ENCODE measurements at regions of chr6 and their contacts with region 1.

Region 1: DNA sequence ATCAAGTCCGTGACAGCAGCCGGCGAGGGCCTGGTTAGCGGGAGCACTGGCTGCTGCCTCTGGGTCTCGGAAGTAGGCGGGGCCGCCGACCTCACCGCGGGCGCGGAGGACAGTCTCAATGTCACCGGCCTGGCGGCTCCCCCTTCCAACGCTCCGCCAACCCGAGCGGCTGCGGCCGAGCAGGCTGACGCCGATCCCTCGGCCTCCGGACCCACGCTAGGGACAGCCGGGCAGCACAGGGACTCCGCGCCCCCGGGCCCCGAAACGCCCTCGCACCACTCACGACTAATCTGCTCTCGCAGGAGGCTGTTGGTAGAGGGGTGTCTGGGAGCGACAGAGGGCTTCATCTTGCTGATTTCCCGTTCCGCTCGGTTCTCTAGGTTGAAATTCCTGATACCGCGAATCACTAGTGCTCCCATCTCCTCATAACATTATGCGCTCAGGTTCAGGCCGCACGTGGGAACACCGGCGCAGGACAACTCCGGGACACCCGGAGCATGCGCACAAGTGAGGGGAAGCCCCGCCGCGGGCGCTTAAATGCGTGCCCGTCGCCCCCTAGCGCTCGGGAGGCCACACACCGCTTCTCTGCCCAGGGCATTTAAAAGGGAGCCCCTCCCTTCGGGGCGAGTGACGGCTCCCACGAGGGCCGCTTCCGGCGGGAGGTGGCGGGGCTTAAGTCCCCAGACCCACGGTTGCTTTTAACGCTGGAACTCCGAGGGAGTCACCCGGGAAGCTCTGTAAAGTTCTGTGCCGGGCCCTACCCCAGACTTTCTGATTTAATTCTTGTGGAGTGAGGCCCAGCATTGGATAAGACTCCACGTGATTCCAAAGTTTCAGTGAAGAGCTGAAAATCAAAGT is at the start of gene NDUFAF4:
- DNase-seq: peak; percentile 88 to 97 (median 95)
- ATAC-seq: peak; percentile 93
- H3K4me3 ChIP-seq: peak within 1 kb of the TSS; percentile 91 to 98
- H3K4me3 Mint-ChIP-seq: peak within 1 kb of the TSS; percentile 98
- H3K27ac ChIP-seq: peak within 1 kb of the TSS; percentile 91
- H3K27ac Mint-ChIP-seq: peak within 1 kb of the TSS; percentile 90
- H3K4me1 ChIP-seq: peaks cover 37% of the 10 kb centered on the region
- H3K4me1 Mint-ChIP-seq: peaks cover 39% of the 10 kb centered on the region
- H3K27me3 ChIP-seq: no peaks in the 10 kb centered on the region
- H3K27me3 Mint-ChIP-seq: peaks cover 6% of the 10 kb centered on the region
- CTCF ChIP-seq: peak; percentile 97
- total RNA-seq, gene NDUFAF4: 31.6 to 34.4 TPM

Region 2: DNA sequence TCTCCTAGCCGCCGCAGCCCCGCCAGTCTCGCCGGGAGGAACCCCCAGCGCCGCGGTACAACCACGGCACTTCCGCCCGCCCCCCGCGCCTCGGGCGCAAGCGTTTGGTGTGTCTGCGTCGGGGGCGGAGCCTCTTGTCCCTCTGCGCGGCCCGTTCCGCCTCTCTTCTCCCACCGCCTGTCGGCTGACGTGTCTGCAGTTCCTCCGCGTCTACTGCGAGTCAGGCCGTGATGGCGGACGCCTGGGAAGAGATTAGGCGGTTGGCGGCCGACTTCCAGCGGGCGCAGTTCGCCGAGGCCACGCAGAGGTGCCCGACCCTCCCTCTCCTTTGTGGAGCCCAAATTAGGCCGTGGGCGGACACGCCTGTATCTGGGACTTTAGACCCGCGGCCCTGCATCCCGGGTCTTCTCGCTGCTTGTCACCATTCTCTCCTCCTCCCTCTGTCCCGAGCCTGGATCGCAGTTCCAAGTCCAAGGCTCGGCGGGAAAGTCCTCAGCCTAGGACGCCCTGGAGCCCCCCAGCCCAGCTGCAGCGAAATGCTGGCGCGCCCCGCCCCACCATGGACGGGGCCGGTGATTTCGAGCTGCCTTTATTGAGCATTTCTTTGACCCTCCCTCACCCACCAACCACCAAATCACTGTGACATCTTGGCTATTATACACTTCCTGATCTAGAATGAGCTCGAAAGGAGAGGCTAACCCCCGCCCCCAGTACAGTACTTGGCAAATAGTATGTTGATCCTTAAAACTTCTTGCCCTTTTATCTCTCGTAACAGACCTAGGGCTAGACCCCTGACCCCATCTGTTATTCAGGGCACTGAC is 375.8 kb before region 1 on chr6 and contains the start of gene UFL1:
- CTCF ChIA-PET with region 1: no interaction called
- POLR2A ChIA-PET with region 1: no interaction called
- intact Hi-C with region 1: loop called (anchors 1 to 5 kb)
- DNase-seq: peak; percentile 92 to 98 (median 96)
- ATAC-seq: peak; percentile 89
- H3K4me3 ChIP-seq: peak within 1 kb of the TSS; percentile 87 to 98
- H3K4me3 Mint-ChIP-seq: peak within 1 kb of the TSS; percentile 100
- H3K27ac ChIP-seq: peak within 1 kb of the TSS; percentile 98 to 99
- H3K27ac Mint-ChIP-seq: peak within 1 kb of the TSS; percentile 100
- H3K4me1 ChIP-seq: peaks cover 20% of the 10 kb centered on the region
- H3K4me1 Mint-ChIP-seq: peaks cover 37% of the 10 kb centered on the region
- H3K27me3 ChIP-seq: no peaks in the 10 kb centered on the region
- H3K27me3 Mint-ChIP-seq: no peaks in the 10 kb centered on the region
- CTCF ChIP-seq: no peak
- total RNA-seq, gene UFL1: 18.0 to 20.3 TPM

Region 3: DNA sequence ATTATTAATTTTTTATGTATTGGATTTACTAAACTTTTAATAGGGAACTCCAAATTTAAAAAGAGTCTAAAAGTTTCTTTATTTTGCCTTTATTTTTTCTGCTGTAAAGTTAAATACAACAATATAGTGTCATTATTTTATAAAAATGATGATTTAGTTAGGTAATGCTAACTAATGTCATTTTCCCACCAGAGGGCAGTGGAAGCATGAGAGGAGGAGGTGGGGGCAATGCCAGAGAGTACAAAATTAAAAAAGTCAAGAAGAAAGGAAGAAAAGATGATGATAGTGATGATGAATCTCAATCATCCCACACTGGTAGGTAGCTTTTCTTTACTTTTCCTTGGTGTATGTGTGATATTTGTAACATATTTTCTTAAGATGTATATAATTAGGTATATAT is 354.9 kb before region 1 on chr6:
- CTCF ChIA-PET with region 1: no interaction called
- POLR2A ChIA-PET with region 1: no interaction called
- intact Hi-C with region 1: loop called (anchors 5 kb)
- DNase-seq: peak in 2 of 9 experiments; percentile 26 to 38
- ATAC-seq: no peak
- H3K4me3 ChIP-seq: no peak overlapping the region
- H3K4me3 Mint-ChIP-seq: no peak overlapping the region
- H3K27ac ChIP-seq: no peak overlapping the region
- H3K27ac Mint-ChIP-seq: no peak overlapping the region
- H3K4me1 ChIP-seq: no peaks in the 10 kb centered on the region
- H3K4me1 Mint-ChIP-seq: no peaks in the 10 kb centered on the region
- H3K27me3 ChIP-seq: no peaks in the 10 kb centered on the region
- H3K27me3 Mint-ChIP-seq: no peaks in the 10 kb centered on the region
- CTCF ChIP-seq: peak; percentile 58

Region 4: DNA sequence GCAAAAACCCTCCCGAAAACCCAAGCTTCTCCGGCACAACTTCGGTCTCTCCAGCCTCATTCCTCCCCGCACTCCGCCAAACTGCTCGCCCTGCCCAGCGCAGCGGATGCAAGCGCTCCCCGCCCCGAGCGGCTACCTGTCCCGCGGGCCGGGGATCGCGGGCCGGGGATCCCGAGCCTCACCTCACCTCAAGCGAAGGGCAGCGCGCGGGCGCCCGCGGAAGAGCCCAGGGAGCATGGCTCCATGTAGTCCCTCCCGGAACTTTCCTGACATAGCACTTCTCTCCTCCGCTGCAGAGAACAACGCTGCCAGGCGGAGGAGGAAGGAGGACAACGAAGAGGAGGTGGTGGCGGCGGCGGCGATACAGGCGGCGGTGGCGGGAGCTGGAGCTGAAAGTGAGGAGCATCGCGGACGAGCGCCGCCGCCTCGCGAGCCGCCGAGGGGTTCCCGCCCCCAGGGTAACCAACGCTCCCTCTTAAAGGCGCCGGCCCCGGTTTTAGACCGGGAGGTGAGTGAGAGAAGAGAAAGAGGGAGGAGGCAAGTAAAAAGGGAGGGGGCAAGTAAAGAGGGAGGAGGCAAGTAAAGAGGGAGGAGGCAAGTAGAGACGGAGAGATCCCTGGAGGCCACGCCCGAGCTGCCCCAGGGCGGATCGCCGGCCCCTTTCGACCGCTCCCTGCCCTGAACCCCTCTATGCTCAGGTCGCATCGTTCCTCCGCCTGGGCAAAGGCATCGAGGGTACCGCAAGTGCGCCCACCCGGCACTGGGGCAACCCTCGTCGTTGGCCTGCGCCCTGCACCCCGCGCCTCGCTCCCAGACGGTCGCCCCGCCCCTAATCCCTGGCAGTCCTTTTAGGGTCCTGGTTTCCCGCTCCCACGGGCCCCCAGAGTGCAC is 60.3 kb before region 1 on chr6 and contains the start of gene GPR63:
- CTCF ChIA-PET with region 1: interaction called, 3 read pairs
- POLR2A ChIA-PET with region 1: no interaction called
- intact Hi-C with region 1: loop called (anchors 1 to 5 kb)
- DNase-seq: peak in 8 of 9 experiments; percentile 24 to 76 (median 55)
- ATAC-seq: peak; percentile 79
- H3K4me3 ChIP-seq: peak within 1 kb of the TSS; percentile 65 to 74
- H3K4me3 Mint-ChIP-seq: peak within 1 kb of the TSS; percentile 82
- H3K27ac ChIP-seq: no peak within 1 kb of the TSS
- H3K27ac Mint-ChIP-seq: peak within 1 kb of the TSS; percentile 6
- H3K4me1 ChIP-seq: peaks cover 15% of the 10 kb centered on the region
- H3K4me1 Mint-ChIP-seq: peaks cover 16% of the 10 kb centered on the region
- H3K27me3 ChIP-seq: peaks cover 0 to 12% of the 10 kb centered on the region in 2 experiments
- H3K27me3 Mint-ChIP-seq: peaks cover 44% of the 10 kb centered on the region
- CTCF ChIP-seq: no peak
- total RNA-seq, gene GPR63: not detected

Region 5: DNA sequence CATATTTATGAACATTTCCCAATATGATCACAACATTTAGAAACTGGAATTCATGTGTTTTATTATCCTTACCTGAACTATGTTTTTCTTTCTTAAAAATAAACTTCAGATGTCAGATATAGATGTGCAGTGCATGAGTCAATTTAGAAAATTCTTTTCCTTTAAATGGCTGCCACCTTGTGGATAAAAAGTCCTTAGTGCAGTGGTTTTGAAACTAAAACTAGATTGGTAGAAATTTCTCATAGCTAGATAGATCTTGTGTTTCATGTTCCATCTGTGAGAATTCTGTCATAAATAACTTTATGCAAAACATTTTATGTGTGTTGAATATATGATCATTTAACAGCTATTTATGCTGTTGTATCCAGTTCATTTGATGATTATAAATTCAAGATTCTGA is 161.9 kb after region 1 on chr6:
- CTCF ChIA-PET with region 1: no interaction called
- POLR2A ChIA-PET with region 1: no interaction called
- intact Hi-C with region 1: loop called (anchors 2 kb)
- DNase-seq: peak in 2 of 9 experiments; percentile 40 to 54
- ATAC-seq: peak; percentile 42
- H3K4me3 ChIP-seq: no peak overlapping the region
- H3K4me3 Mint-ChIP-seq: no peak overlapping the region
- H3K27ac ChIP-seq: no peak overlapping the region
- H3K27ac Mint-ChIP-seq: no peak overlapping the region
- H3K4me1 ChIP-seq: no peaks in the 10 kb centered on the region
- H3K4me1 Mint-ChIP-seq: no peaks in the 10 kb centered on the region
- H3K27me3 ChIP-seq: no peaks in the 10 kb centered on the region
- H3K27me3 Mint-ChIP-seq: no peaks in the 10 kb centered on the region
- CTCF ChIP-seq: peak; percentile 71

Measured in CD8-positive, alpha-beta T cell (primary cell).